Mammary epithelial cell (primary cell): ENCODE measurements at regions of chr18 and their contacts with region 1.

Region 1: GRCh38 chr18:67104700-67105284 is 411.7 kb downstream of the DSEL start:
- DNase-seq: peak; percentile 58
- H3K4me3 ChIP-seq: no peak overlapping the region
- H3K27ac ChIP-seq: no peak overlapping the region
- H3K4me1 ChIP-seq: no peaks in the 10 kb centered on the region
- H3K27me3 ChIP-seq: peaks cover 3% of the 10 kb centered on the region
- CTCF ChIP-seq: peak; percentile 76 to 95

Region 2: GRCh38 chr18:67183398-67183797 is 78.6 kb after region 1 on chr18:
- CTCF ChIA-PET with region 1: no interaction called
- dilution Hi-C with region 1: no loop called
- in situ Hi-C with region 1: loop called in 1 of 2 experiments (anchors 10 kb)
- intact Hi-C with region 1: no loop called
- DNase-seq: no peak
- H3K4me3 ChIP-seq: no peak overlapping the region
- H3K27ac ChIP-seq: no peak overlapping the region
- H3K4me1 ChIP-seq: no peaks in the 10 kb centered on the region
- H3K27me3 ChIP-seq: peaks cover 4% of the 10 kb centered on the region
- CTCF ChIP-seq: no peak

Region 3: DNA sequence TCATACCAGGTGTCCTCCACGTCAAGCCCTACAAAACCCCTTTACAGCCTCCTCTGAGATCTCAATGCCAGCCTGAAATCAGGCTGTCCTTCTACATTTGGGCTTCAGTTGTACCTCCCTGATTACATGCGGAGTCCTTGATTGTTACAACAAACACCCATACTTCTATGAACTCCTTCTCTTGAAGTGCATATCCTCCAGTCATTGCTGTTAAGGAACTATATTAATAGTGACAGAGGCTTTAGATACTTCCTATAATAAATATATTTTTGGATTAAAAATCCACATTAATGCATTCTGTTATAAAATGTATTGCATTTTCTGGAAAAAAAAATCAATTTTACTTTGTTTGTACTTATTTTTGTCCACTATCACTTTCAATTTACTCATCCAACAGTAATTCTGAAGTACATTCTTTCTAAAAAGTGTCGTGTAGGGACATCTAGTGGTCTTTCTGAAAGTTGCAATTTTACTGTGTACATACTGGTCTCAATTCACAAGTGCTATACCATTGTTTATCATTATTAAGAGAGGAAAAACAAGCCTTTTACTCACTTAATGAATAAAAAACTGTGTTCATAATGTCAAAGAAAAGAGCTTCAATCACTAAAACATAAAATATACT is 95.3 kb after region 1 on chr18:
- CTCF ChIA-PET with region 1: no interaction called
- dilution Hi-C with region 1: loop called (anchors 5 kb)
- in situ Hi-C with region 1: loop called in 1 of 2 experiments (anchors 10 kb)
- intact Hi-C with region 1: loop called (anchors 1 kb)
- DNase-seq: peak; percentile 37
- H3K4me3 ChIP-seq: no peak overlapping the region
- H3K27ac ChIP-seq: no peak overlapping the region
- H3K4me1 ChIP-seq: no peaks in the 10 kb centered on the region
- H3K27me3 ChIP-seq: peaks cover 6% of the 10 kb centered on the region
- CTCF ChIP-seq: peak; percentile 60 to 72